PC-3 (cell line): ENCODE measurements at regions of chr5 and their contacts with region 1.

Region 1: DNA sequence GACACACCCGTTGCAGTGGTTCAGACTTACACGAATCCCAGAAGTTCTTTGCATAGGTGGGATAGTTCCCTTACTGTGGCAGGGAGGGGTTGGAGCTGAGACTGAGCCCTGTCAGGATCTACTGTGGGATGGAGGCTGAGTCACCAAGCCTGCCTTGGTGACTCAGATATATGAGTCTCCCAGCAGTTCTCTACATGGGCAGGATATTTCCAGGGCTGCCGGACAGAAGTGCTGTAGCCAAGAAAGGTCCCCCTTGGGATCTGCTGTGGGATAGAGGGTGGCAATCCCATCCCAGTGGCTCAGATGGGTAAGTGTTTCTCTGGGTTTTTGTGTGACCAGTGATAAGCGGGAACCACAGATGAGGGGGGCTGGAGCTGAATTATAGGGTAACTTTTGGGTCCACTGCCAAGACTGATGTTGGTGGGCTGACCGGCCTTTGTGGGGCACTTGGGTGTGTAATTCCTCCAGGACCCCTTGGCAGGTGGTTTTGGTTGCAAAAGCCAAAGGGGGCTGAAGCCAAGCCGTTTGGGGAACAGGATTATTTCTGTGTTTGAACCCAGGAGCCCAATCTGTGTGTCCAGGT is 18.7 kb downstream of the XRCC4 start:
- DNase-seq: peak; percentile 89
- ATAC-seq: peak; percentile 97
- H3K4me3 ChIP-seq: no peak overlapping the region
- H3K27ac ChIP-seq: peak overlapping the region; percentile 38; the same call in 1 of the 2 replicates
- H3K4me1 ChIP-seq: peaks cover 39% of the 10 kb centered on the region
- H3K27me3 ChIP-seq: no peaks in the 10 kb centered on the region
- CTCF ChIP-seq: no peak

Region 2: GRCh38 chr5:83244516-83244915 is 148.5 kb after region 1 on chr5:
- CTCF ChIA-PET with region 1: no interaction called
- POLR2A ChIA-PET with region 1: no interaction called
- intact Hi-C with region 1: loop called (anchors 10 kb)
- DNase-seq: no peak
- ATAC-seq: no peak
- H3K4me3 ChIP-seq: no peak overlapping the region
- H3K27ac ChIP-seq: no peak overlapping the region
- H3K4me1 ChIP-seq: 0 out of 2 replicates have a peak, but pooled peaks cover 6% of the 10 kb centered on the region
- H3K27me3 ChIP-seq: no peaks in the 10 kb centered on the region
- CTCF ChIP-seq: no peak